ENCODE measurements at regions of chr13 and their contacts with region 1.

Region 1: GRCh38 chr13:28819735-28820098 is 422 bp upstream of the MTUS2 start:
- DNase-seq: peak; percentile 28
- H3K4me3 ChIP-seq: peak overlapping the region in 2 of 4 donors; percentile 26 to 45
- H3K27ac ChIP-seq: no peak overlapping the region
- H3K4me1 ChIP-seq: peaks cover 0 to 15% (median 5%) of the 10 kb centered on the region in 4 donors
- H3K27me3 ChIP-seq: peaks cover 67% of the 10 kb centered on the region
- CTCF ChIP-seq: peak in 1 of 5 experiments; percentile 8
- EP300 ChIP-seq: no peak
- POLR2A ChIP-seq: no peak

Region 2: DNA sequence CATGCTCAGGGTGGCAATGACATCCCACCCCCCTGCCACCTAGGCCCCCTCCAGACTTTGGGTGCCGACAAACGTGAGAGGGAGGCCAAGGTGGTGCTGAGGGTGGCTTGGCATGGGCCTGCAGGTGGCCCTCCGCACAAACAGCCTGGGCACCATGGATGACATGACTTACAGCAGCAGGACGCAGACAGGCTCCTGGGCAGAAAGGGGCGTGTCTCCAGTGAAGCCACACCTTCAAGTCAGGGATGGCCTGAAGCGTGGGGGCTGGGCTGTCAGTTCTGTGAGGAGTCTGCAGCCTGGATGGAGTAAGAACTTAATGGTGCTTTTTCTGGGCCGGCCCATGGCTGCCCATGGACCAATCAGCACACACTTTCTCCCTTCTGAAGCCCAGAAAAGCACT is 135.5 kb before region 1 on chr13:
- in situ Hi-C with region 1: no loop called
- intact Hi-C with region 1: no loop called
- DNase-seq: peak; percentile 25
- H3K4me3 ChIP-seq: no peak overlapping the region
- H3K27ac ChIP-seq: no peak overlapping the region
- H3K4me1 ChIP-seq: no peaks in the 10 kb centered on the region
- H3K27me3 ChIP-seq: no peaks in the 10 kb centered on the region
- CTCF ChIP-seq: no peak
- EP300 ChIP-seq: no peak
- POLR2A ChIP-seq: no peak

Region 3: GRCh38 chr13:29260683-29261082 is 441.0 kb after region 1 on chr13:
- in situ Hi-C with region 1: loop called in 1 of 4 experiments (anchors 25 kb)
- intact Hi-C with region 1: no loop called
- DNase-seq: no peak
- H3K4me3 ChIP-seq: no peak overlapping the region
- H3K27ac ChIP-seq: no peak overlapping the region
- H3K4me1 ChIP-seq: no peaks in the 10 kb centered on the region
- H3K27me3 ChIP-seq: no peaks in the 10 kb centered on the region
- CTCF ChIP-seq: no peak
- EP300 ChIP-seq: no peak
- POLR2A ChIP-seq: no peak

Region 4: GRCh38 chr13:29771247-29771646 is 951.5 kb after region 1 on chr13:
- in situ Hi-C with region 1: no loop called
- intact Hi-C with region 1: no loop called
- DNase-seq: no peak
- H3K4me3 ChIP-seq: no peak overlapping the region
- H3K27ac ChIP-seq: no peak overlapping the region
- H3K4me1 ChIP-seq: peaks cover 0 to 5% (median 0%) of the 10 kb centered on the region in 4 donors
- H3K27me3 ChIP-seq: no peaks in the 10 kb centered on the region
- CTCF ChIP-seq: peak; percentile 40 to 62 (median 45)
- EP300 ChIP-seq: no peak
- POLR2A ChIP-seq: no peak